Panc1 (cell line): ENCODE measurements at regions of chr18 and their contacts with region 1.

Region 1: GRCh38 chr18:34083910-34084535 is 140.7 kb downstream of the NOL4 start:
- DNase-seq: no peak
- ATAC-seq: no peak
- H3K4me3 ChIP-seq: no peak overlapping the region
- H3K27ac ChIP-seq: no peak overlapping the region
- H3K4me1 ChIP-seq: no peaks in the 10 kb centered on the region
- H3K27me3 ChIP-seq: no peaks in the 10 kb centered on the region
- CTCF ChIP-seq: no peak

Region 2: DNA sequence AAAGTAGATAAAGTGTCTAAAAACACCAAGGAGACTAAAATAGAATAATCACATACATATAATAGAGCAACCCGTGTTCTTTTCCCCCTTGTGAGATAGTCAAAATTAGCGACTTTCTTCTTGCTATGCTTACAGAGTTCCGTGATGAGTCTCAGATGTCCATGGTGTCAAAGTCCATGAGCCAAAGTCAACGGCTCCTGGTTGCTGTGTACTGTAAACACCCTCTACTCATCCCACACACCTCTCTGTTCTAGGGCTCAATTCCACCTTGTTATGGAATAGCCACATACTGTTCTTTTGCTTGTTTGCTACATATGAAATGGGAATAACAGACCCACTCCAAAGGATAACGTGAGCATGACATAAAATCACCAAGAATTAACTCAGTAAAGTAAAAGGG is 1665.9 kb before region 1 on chr18:
- CTCF ChIA-PET with region 1: no interaction called
- POLR2A ChIA-PET with region 1: no interaction called
- in situ Hi-C with region 1: no loop called
- intact Hi-C with region 1: loop called (anchors 10 kb)
- DNase-seq: no peak
- ATAC-seq: no peak
- H3K4me3 ChIP-seq: no peak overlapping the region
- H3K27ac ChIP-seq: no peak overlapping the region
- H3K4me1 ChIP-seq: no peaks in the 10 kb centered on the region
- H3K27me3 ChIP-seq: no peaks in the 10 kb centered on the region
- CTCF ChIP-seq: no peak